Natural killer cell (primary cell): ENCODE measurements at regions of chr3 and their contacts with region 1.

Region 1: DNA sequence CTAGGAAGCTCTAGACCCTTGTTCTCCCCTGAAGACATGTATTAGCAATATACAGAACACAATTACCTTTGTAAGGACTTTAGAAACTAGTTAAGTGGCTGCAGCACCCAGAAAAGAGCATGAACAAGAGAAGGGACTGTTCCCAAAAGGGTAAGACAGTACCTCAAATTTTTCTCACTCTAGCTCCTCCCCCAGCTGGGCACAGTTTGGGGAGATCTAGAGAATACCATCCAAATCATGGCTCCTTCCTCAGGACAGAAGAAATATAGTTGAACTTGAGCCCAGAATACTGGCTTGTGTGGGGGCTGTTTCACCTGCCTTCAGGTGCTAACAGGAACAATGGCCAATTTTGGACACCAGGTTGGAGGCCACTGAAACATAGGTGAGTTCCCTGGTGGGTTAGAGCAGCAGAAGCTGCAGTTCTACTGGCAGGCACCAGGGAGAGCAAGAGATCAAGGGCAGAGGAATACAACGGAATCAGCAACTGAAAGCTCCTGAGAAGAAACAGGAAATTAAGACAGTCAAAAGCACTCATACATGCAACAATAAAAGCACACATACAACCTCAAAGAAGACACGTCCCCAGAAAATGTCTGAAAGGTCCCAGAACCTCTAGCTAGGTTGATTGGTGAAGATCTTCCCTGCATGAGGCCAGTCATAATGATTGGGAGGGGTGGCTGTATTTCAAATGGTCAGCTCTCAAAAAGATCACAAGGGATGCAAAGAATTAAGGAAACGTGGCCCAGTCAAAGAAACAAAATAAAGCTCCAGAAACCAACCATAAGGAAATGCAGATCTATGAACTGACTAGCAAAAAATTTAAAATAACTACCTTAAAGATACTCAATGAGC is 104.9 kb upstream of the ASB14 start:
- DNase-seq: peak; percentile 17 to 77
- ATAC-seq: peak; percentile 84 to 99 (median 95)
- H3K4me3 ChIP-seq: no peak overlapping the region
- H3K4me3 Mint-ChIP-seq: peak overlapping the region; percentile 2
- H3K27ac ChIP-seq: no peak overlapping the region
- H3K27ac Mint-ChIP-seq: peak overlapping the region in 1 of 2 donors; percentile 11
- H3K4me1 ChIP-seq: no peaks in the 10 kb centered on the region
- H3K4me1 Mint-ChIP-seq: peaks cover 6% of the 10 kb centered on the region in 2 donors
- H3K27me3 ChIP-seq: no peaks in the 10 kb centered on the region
- H3K27me3 Mint-ChIP-seq: peaks cover 14 to 25% of the 10 kb centered on the region in 2 donors
- CTCF ChIP-seq: peak; percentile 76

Region 2: GRCh38 chr3:57423335-57423734 is 25.9 kb after region 1 on chr3:
- intact Hi-C with region 1: no loop called
- DNase-seq: no peak
- ATAC-seq: no peak
- H3K4me3 ChIP-seq: no peak overlapping the region
- H3K4me3 Mint-ChIP-seq: no peak overlapping the region
- H3K27ac ChIP-seq: no peak overlapping the region
- H3K27ac Mint-ChIP-seq: no peak overlapping the region
- H3K4me1 ChIP-seq: no peaks in the 10 kb centered on the region
- H3K4me1 Mint-ChIP-seq: no peaks in the 10 kb centered on the region
- H3K27me3 ChIP-seq: no peaks in the 10 kb centered on the region
- H3K27me3 Mint-ChIP-seq: peaks cover 6 to 13% of the 10 kb centered on the region in 2 donors
- CTCF ChIP-seq: no peak

Region 3: GRCh38 chr3:57852896-57853295 is 455.5 kb after region 1 on chr3:
- intact Hi-C with region 1: loop called (anchors 2 kb)
- DNase-seq: peak in 1 of 2 donors; percentile 4
- ATAC-seq: no peak
- H3K4me3 ChIP-seq: no peak overlapping the region
- H3K4me3 Mint-ChIP-seq: no peak overlapping the region
- H3K27ac ChIP-seq: no peak overlapping the region
- H3K27ac Mint-ChIP-seq: peak overlapping the region; percentile 25 to 43
- H3K4me1 ChIP-seq: no peaks in the 10 kb centered on the region
- H3K4me1 Mint-ChIP-seq: no peaks in the 10 kb centered on the region
- H3K27me3 ChIP-seq: no peaks in the 10 kb centered on the region
- H3K27me3 Mint-ChIP-seq: no peaks in the 10 kb centered on the region
- CTCF ChIP-seq: peak; percentile 19

Region 4: DNA sequence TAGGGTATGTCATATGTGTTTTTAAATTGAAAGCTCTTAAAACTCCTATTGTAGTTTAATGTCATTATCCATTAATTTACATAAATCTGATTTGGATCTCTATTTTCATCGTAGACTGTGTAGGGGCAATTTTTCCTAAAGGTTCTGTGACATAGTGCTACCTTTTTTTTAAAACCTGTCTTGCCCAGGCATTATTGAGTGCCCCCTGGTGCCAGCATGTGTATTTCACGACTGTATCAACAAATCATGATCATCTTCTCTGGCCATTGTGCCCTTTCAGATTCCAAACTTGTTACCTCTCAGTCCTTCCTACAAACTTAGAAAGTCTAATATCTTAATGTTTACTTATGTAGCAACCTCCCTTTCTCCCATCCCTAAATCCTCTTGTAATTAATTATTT is 513.6 kb after region 1 on chr3:
- intact Hi-C with region 1: loop called (anchors 1 kb)
- DNase-seq: peak in 1 of 2 donors; percentile 50
- ATAC-seq: peak in 1 of 3 donors; percentile 41
- H3K4me3 ChIP-seq: no peak overlapping the region
- H3K4me3 Mint-ChIP-seq: no peak overlapping the region
- H3K27ac ChIP-seq: no peak overlapping the region
- H3K27ac Mint-ChIP-seq: no peak overlapping the region
- H3K4me1 ChIP-seq: no peaks in the 10 kb centered on the region
- H3K4me1 Mint-ChIP-seq: no peaks in the 10 kb centered on the region
- H3K27me3 ChIP-seq: no peaks in the 10 kb centered on the region
- H3K27me3 Mint-ChIP-seq: no peaks in the 10 kb centered on the region
- CTCF ChIP-seq: peak; percentile 44

Region 5: GRCh38 chr3:58217209-58217811 is 819.9 kb after region 1 on chr3:
- intact Hi-C with region 1: loop called (anchors 5 kb)
- DNase-seq: peak; percentile 33 to 81
- ATAC-seq: peak; percentile 81 to 90 (median 83)
- H3K4me3 ChIP-seq: no peak overlapping the region
- H3K4me3 Mint-ChIP-seq: peak overlapping the region; percentile 60
- H3K27ac ChIP-seq: no peak overlapping the region
- H3K27ac Mint-ChIP-seq: peak overlapping the region in 1 of 2 donors; percentile 71
- H3K4me1 ChIP-seq: peaks cover 23% of the 10 kb centered on the region
- H3K4me1 Mint-ChIP-seq: peaks cover 8 to 14% of the 10 kb centered on the region in 2 donors
- H3K27me3 ChIP-seq: no peaks in the 10 kb centered on the region
- H3K27me3 Mint-ChIP-seq: peaks cover 0 to 2% of the 10 kb centered on the region in 2 donors
- CTCF ChIP-seq: peak; percentile 81